ENCODE measurements at regions of chr22 and their contacts with region 1.

Region 1: DNA sequence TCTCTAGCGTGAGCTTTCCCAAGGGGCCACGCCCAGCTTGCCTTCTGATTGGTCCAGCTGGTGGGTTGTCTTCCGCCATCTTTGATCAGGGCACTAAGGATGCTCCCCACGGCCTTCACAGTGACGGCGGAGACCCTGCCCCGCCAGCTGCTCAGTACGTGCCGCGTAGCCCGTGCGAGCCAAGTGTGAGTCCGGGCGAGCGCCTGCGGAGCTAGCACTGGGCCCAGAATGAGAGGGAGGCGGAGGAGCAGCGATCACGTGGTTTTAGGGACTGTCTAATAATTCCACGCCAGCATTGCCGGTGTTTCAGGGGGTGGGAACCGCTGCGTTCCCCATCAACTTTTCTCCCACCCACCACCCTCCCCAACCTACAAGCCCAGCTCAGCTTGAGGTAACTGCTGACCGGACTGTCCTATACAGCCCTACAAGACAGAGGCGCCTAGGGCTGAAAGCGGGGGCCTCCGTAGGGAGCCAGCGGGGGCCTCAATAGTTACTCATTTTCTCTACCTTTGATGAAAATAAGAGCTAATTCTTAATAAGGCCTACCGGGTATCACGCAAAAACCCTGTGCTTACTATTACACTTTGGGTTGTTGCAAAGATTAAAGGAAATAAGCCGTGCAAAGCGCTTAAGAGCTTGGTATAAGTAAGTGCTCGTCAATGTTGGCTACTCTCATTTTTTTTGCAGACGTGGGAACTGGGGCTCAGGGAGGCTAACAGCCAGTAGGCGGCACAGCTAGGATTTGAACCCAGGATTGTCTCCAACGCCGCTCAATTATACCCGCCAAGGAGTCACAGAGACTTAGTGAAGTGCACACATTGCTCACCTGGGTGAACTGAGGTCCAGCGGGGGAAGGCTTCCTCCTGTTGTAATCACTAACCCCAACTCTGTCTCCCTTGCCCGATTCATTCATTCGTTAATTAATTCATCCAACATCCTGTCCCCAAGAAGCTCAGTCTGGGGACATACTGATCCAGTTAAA is 1.3 kb upstream of the MTFP1 start:
- DNase-seq: peak; percentile 98
- CTCF ChIP-seq: no peak

Region 2: GRCh38 chr22:30413745-30414524 is 10.3 kb before region 1 on chr22:
- CTCF ChIA-PET with region 1: interaction called, 22 read pairs
- POLR2A ChIA-PET with region 1: interaction called, 3 read pairs
- DNase-seq: no peak
- CTCF ChIP-seq: no peak

Region 3: DNA sequence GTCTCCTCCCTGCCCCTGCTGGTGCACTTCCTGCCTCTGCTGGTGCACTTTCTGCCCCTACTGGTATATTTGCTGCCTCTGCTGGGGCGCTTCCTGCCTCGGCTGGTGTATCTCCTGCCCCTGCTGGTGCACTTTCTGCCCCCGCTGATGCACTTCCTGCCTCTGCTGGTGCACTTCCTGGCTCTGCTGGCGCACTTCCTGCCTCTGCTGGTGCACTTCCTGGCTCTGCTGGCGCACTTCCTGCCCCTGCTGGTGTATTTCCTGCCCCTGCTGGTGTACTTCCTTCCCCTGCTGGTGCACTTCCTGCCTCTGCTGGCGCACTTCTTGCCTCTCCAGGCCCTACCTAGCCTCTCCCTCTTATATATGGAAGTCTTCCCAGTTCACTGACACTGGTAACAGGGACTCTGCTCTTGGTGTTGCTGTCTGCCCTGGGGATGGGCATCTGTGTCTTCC is 11.4 kb after region 1 on chr22:
- CTCF ChIA-PET with region 1: interaction called, 57 read pairs
- POLR2A ChIA-PET with region 1: no interaction called
- DNase-seq: no peak
- CTCF ChIP-seq: peak; percentile 7

Region 4: DNA sequence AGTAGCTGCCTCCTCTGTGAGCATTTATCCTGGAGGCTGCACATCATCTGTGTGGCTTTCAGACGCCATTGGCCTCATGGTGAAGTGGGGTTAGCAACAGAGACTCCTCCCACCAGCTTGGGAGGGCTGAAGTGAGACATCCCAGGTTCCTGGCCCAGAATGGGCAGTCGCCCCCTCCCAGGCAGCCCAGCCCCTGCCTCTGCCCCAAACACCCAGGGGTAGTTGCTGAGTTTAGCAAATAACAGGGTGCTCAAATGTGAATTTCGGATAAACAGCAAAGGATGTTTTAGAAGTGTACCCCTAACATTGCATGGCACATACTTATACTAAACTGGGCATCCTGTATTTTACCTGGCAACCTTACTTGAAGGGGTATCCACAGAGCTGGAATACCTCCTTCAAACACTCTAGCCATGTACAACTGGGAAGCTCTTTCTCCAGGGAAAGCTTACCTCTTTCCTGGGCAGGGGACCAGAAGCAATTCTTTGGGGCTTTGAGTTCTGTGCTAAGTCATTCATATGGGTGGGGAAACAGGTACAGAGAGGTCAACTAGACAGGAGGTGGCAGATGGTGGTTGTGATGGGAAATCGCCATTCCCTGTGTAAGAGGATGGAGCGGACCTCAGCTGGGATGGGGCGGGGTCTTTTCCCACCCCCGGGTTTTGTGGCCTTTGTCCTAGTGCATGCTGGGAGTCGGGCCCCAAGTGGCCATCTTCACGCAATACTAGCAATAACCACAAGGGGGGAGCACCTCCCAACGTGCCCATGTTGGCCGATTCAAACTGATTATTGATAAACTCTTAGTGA is 20.6 kb after region 1 on chr22:
- CTCF ChIA-PET with region 1: interaction called, 111 read pairs
- POLR2A ChIA-PET with region 1: no interaction called
- DNase-seq: peak; percentile 86
- CTCF ChIP-seq: peak; percentile 71

Region 5: GRCh38 chr22:30485362-30485988 is 61.2 kb after region 1 on chr22:
- CTCF ChIA-PET with region 1: interaction called, 11 read pairs
- POLR2A ChIA-PET with region 1: no interaction called
- DNase-seq: peak; percentile 94
- CTCF ChIP-seq: peak; percentile 88